WTC11 (cell line): ENCODE measurements at regions of chr1 and their contacts with region 1.

Region 1: DNA sequence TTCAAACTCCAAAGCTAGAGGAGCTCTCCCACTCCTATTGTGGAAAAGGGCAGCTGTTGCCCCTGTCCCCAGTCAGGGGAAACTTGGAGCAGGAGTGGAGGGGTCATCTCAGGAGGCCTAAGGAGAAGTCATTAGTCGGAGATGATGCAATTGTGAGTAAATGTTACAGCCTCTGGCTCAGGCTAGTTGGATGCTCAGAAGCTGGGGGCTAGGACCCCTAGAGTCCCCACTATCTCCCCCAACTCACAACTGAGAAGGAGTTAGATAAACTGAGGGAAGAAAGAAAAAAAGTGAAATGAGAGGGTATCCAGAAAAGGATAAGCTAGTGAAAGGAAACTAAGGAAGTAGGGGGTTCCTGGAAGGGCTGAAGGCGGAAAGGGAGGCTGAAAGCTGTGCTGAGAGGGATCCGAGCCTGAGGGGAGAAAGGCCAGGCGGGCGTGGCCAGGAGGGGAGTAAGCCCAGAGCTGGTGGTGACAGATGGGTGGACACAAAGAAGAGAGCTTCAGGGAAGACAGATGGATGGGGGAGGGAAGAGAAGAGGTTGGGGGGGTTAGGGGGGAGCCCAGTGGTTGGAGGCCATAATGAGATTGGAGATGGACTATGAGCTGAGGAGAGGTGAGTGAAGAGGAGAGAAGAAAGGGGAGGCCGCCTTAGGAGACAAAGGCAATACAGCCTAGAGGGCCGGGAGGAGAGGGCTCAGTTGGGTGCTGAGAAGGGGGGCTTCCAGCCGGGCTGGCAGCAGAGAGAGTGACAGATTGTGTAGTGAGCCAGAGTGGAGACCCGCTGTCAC is 4.5 kb upstream of the NHLH1 start:
- DNase-seq: peak; percentile 45
- ATAC-seq: peak; percentile 55
- H3K4me3 Mint-ChIP-seq: no peak overlapping the region
- H3K27ac Mint-ChIP-seq: peak overlapping the region; percentile 75
- H3K4me1 Mint-ChIP-seq: peaks cover 44% of the 10 kb centered on the region
- H3K27me3 Mint-ChIP-seq: no peaks in the 10 kb centered on the region
- CTCF ChIP-seq: no peak

Region 2: GRCh38 chr1:160416369-160416768 is 54.0 kb after region 1 on chr1:
- CTCF ChIA-PET with region 1: interaction called, 11 read pairs
- POLR2A ChIA-PET with region 1: no interaction called
- DNase-seq: peak; percentile 47
- ATAC-seq: peak; percentile 92
- H3K4me3 Mint-ChIP-seq: no peak overlapping the region
- H3K27ac Mint-ChIP-seq: 0 out of 2 replicates have a peak overlapping the region, but pooled peaks have one; percentile 20
- H3K4me1 Mint-ChIP-seq: peaks cover 20% of the 10 kb centered on the region
- H3K27me3 Mint-ChIP-seq: no peaks in the 10 kb centered on the region
- CTCF ChIP-seq: peak; percentile 35; the same call in 1 of the 2 replicates